Activated B cell treated with CpG ODN at 0.5 μM for 24 hours (primary cell): ENCODE measurements at regions of chr16 and their contacts with region 1.

Region 1: GRCh38 chr16:117379-118365 is 20.8 kb downstream of the NPRL3 start:
- DNase-seq: peak; percentile 46
- ATAC-seq: peak; percentile 93
- H3K4me3 Mint-ChIP-seq: no peak overlapping the region
- H3K27ac Mint-ChIP-seq: no peak overlapping the region
- H3K4me1 Mint-ChIP-seq: peaks cover 3% of the 10 kb centered on the region
- H3K27me3 Mint-ChIP-seq: no peaks in the 10 kb centered on the region
- CTCF ChIP-seq: no peak

Region 2: GRCh38 chr16:106623-107324 is 10.9 kb before region 1 on chr16:
- CTCF ChIA-PET with region 1: interaction called, 18 read pairs
- POLR2A ChIA-PET with region 1: no interaction called
- intact Hi-C with region 1: no loop called
- DNase-seq: no peak
- ATAC-seq: peak; percentile 81
- H3K4me3 Mint-ChIP-seq: no peak overlapping the region
- H3K27ac Mint-ChIP-seq: no peak overlapping the region
- H3K4me1 Mint-ChIP-seq: no peaks in the 10 kb centered on the region
- H3K27me3 Mint-ChIP-seq: no peaks in the 10 kb centered on the region
- CTCF ChIP-seq: no peak

Region 3: DNA sequence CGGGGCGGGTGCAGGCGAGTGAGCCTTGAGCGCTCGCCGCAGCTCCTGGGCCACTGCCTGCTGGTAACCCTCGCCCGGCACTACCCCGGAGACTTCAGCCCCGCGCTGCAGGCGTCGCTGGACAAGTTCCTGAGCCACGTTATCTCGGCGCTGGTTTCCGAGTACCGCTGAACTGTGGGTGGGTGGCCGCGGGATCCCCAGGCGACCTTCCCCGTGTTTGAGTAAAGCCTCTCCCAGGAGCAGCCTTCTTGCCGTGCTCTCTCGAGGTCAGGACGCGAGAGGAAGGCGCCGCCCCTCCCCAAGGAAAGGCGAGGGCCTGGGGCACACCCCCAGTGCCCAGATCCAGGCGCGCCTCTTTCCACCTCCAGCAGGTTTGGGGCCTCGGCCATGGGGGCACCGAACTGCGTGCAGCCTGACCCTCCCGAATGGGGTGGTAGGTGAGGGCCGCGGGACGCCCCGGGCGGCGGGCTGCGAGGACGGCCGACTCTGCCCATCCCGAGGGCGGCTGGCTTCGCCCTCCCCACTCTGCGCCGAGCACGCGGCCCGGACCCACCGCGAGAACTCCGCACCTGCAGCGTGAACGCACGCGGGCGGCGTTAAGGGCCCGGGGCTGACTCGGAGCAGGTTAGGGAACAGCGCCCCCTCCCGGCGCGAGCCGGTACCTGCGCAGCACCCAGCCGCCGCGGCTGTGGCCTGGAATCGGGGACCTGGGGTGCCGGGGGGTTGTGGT is 63.4 kb after region 1 on chr16:
- CTCF ChIA-PET with region 1: no interaction called
- POLR2A ChIA-PET with region 1: interaction called, 4 read pairs
- intact Hi-C with region 1: loop called (anchors 1 kb)
- DNase-seq: peak; percentile 79
- ATAC-seq: peak; percentile 83
- H3K4me3 Mint-ChIP-seq: peak overlapping the region; percentile 19
- H3K27ac Mint-ChIP-seq: no peak overlapping the region
- H3K4me1 Mint-ChIP-seq: peaks cover 10% of the 10 kb centered on the region
- H3K27me3 Mint-ChIP-seq: peaks cover 11% of the 10 kb centered on the region
- CTCF ChIP-seq: peak; percentile 84

Region 4: DNA sequence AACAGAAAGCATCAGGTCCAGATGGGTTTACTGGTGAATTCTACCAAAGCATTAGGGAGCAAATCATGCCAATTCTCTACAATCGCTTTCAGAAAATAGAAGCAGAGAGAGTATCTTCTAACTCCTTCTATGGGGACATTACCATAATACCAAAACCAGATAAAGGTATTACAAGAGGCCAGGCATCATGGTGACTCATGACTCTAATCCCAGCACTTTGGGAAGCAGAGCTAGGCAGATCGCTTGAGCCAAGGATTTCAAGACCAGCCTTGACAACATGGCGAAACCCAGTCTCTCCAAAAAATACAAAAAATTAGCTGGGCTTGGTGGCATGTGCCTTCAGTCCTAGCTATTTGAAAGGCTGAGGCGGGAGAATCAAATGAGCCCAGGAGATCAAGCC is 85.6 kb after region 1 on chr16:
- CTCF ChIA-PET with region 1: no interaction called
- POLR2A ChIA-PET with region 1: no interaction called
- intact Hi-C with region 1: no loop called
- DNase-seq: no peak
- ATAC-seq: no peak
- H3K4me3 Mint-ChIP-seq: no peak overlapping the region
- H3K27ac Mint-ChIP-seq: no peak overlapping the region
- H3K4me1 Mint-ChIP-seq: no peaks in the 10 kb centered on the region
- H3K27me3 Mint-ChIP-seq: no peaks in the 10 kb centered on the region
- CTCF ChIP-seq: no peak

Region 5: GRCh38 chr16:361872-362701 is 244.4 kb after region 1 on chr16:
- CTCF ChIA-PET with region 1: interaction called, 18 read pairs
- POLR2A ChIA-PET with region 1: no interaction called
- intact Hi-C with region 1: loop called (anchors 1 kb)
- DNase-seq: peak; percentile 57
- ATAC-seq: peak; percentile 92
- H3K4me3 Mint-ChIP-seq: no peak overlapping the region
- H3K27ac Mint-ChIP-seq: no peak overlapping the region
- H3K4me1 Mint-ChIP-seq: peaks cover 3% of the 10 kb centered on the region
- H3K27me3 Mint-ChIP-seq: peaks cover 5% of the 10 kb centered on the region
- CTCF ChIP-seq: peak; percentile 45